HCT116 (cell line): ENCODE measurements at regions of chr3 and their contacts with region 1.

Region 1: GRCh38 chr3:67113802-67114407 is 115.8 kb downstream of the KBTBD8 start:
- DNase-seq: peak; percentile 62
- ATAC-seq: peak; percentile 93
- H3K4me3 ChIP-seq: no peak overlapping the region
- H3K27ac ChIP-seq: no peak overlapping the region
- H3K4me1 ChIP-seq: no peaks in the 10 kb centered on the region
- H3K27me3 ChIP-seq: no peaks in the 10 kb centered on the region
- CTCF ChIP-seq: peak; percentile 72 to 94 (median 89)
- POLR2A ChIP-seq: no peak
- RAD21 ChIP-seq: peak; percentile 72

Region 2: GRCh38 chr3:66394019-66394752 is 719.7 kb before region 1 on chr3:
- CTCF ChIA-PET with region 1: no interaction called
- POLR2A ChIA-PET with region 1: no interaction called
- RAD21 ChIA-PET with region 1: no interaction called
- intact Hi-C with region 1: no loop called
- DNase-seq: no peak
- ATAC-seq: no peak
- H3K4me3 ChIP-seq: no peak overlapping the region
- H3K27ac ChIP-seq: no peak overlapping the region
- H3K4me1 ChIP-seq: no peaks in the 10 kb centered on the region
- H3K27me3 ChIP-seq: no peaks in the 10 kb centered on the region
- CTCF ChIP-seq: no peak
- POLR2A ChIP-seq: no peak
- RAD21 ChIP-seq: no peak

Region 3: DNA sequence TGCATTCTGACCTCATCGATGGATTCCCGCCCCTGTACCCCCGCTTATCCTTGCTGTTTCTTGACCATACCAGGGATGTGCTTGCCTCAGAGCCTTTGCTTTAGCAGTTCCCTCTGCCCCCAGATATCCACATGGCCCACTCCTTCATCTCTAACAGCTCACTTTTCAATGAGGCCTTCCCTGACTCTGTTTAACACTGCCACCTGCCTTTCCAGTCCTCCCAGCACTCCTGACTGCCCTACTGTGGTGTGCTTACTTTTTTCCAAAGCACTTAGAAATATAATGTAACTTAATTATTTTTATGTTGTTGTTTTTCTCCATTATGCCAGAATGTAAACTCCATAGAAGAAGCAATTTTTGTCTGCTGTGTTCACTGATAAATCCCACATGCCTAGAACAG is 340.6 kb before region 1 on chr3:
- CTCF ChIA-PET with region 1: no interaction called
- POLR2A ChIA-PET with region 1: no interaction called
- RAD21 ChIA-PET with region 1: no interaction called
- intact Hi-C with region 1: no loop called
- DNase-seq: no peak
- ATAC-seq: no peak
- H3K4me3 ChIP-seq: no peak overlapping the region
- H3K27ac ChIP-seq: no peak overlapping the region
- H3K4me1 ChIP-seq: no peaks in the 10 kb centered on the region
- H3K27me3 ChIP-seq: peaks cover 26% of the 10 kb centered on the region
- CTCF ChIP-seq: no peak
- POLR2A ChIP-seq: no peak
- RAD21 ChIP-seq: no peak

Region 4: GRCh38 chr3:66948838-66949237 is 165.1 kb before region 1 on chr3:
- CTCF ChIA-PET with region 1: no interaction called
- POLR2A ChIA-PET with region 1: no interaction called
- RAD21 ChIA-PET with region 1: no interaction called
- intact Hi-C with region 1: no loop called
- DNase-seq: no peak
- ATAC-seq: no peak
- H3K4me3 ChIP-seq: no peak overlapping the region
- H3K27ac ChIP-seq: no peak overlapping the region
- H3K4me1 ChIP-seq: no peaks in the 10 kb centered on the region
- H3K27me3 ChIP-seq: peaks cover 78% of the 10 kb centered on the region
- CTCF ChIP-seq: no peak
- POLR2A ChIP-seq: no peak
- RAD21 ChIP-seq: no peak

Region 5: GRCh38 chr3:66971891-66972551 is 141.9 kb before region 1 on chr3:
- CTCF ChIA-PET with region 1: interaction called, 5 read pairs
- POLR2A ChIA-PET with region 1: no interaction called
- RAD21 ChIA-PET with region 1: no interaction called
- intact Hi-C with region 1: loop called (anchors 2 kb)
- DNase-seq: peak; percentile 51
- ATAC-seq: peak; percentile 98
- H3K4me3 ChIP-seq: peak overlapping the region; percentile 17 to 35; a peak in 3 of 4 replicates
- H3K27ac ChIP-seq: no peak overlapping the region
- H3K4me1 ChIP-seq: peaks cover 0 to 6% of the 10 kb centered on the region in 2 experiments; a peak in 1 of 4 replicates
- H3K27me3 ChIP-seq: peaks cover 30% of the 10 kb centered on the region
- CTCF ChIP-seq: peak; percentile 59 to 84 (median 83); a peak in 5 of 6 replicates
- POLR2A ChIP-seq: no peak
- RAD21 ChIP-seq: peak; percentile 71

Region 6: GRCh38 chr3:67468511-67468910 is 354.6 kb after region 1 on chr3:
- CTCF ChIA-PET with region 1: no interaction called
- POLR2A ChIA-PET with region 1: no interaction called
- RAD21 ChIA-PET with region 1: no interaction called
- intact Hi-C with region 1: no loop called
- DNase-seq: no peak
- ATAC-seq: no peak
- H3K4me3 ChIP-seq: no peak overlapping the region
- H3K27ac ChIP-seq: no peak overlapping the region
- H3K4me1 ChIP-seq: no peaks in the 10 kb centered on the region
- H3K27me3 ChIP-seq: no peaks in the 10 kb centered on the region
- CTCF ChIP-seq: no peak
- POLR2A ChIP-seq: no peak
- RAD21 ChIP-seq: no peak

Region 7: GRCh38 chr3:67790043-67790442 is 676.1 kb after region 1 on chr3:
- CTCF ChIA-PET with region 1: interaction called, 3 read pairs
- POLR2A ChIA-PET with region 1: no interaction called
- RAD21 ChIA-PET with region 1: interaction called in 1 of 2 experiments, 3 read pairs
- intact Hi-C with region 1: loop called (anchors 2 kb)
- DNase-seq: peak; percentile 23
- ATAC-seq: peak; percentile 94
- H3K4me3 ChIP-seq: no peak overlapping the region
- H3K27ac ChIP-seq: no peak overlapping the region
- H3K4me1 ChIP-seq: no peaks in the 10 kb centered on the region
- H3K27me3 ChIP-seq: no peaks in the 10 kb centered on the region
- CTCF ChIP-seq: peak; percentile 46 to 74 (median 69); a peak in 5 of 6 replicates
- POLR2A ChIP-seq: no peak
- RAD21 ChIP-seq: peak; percentile 65

Region 8: DNA sequence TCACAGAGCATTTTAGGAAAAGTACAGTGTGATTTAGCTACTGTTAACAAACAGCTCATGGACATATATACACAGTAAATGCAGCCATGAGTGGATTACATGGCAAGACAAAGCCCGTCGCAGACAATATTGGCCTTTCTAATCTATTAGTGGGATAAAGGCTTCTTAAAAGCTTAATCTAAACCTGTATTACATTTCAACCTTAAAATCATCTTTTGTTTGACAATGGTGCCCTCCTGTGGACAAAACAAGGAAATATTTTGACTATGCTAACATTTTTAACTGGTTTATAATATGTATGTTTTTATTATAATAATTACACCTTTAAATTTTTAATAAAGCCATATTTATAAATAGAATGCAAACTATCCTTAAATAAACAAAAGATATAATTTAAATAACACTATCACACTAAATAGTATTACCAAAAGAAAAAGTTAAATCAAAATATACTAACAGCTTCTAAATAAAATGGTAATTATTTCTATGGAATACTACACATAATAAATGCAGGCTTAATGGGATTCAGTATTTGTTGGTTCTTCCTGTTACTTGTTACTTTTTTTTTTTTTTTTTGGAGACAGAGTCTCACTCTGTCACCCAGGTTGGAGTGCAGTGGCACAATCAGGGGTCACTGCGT is 1779.8 kb after region 1 on chr3:
- CTCF ChIA-PET with region 1: interaction called, 13 read pairs
- POLR2A ChIA-PET with region 1: no interaction called
- RAD21 ChIA-PET with region 1: no interaction called
- intact Hi-C with region 1: loop called (anchors 5 kb)
- DNase-seq: no peak
- ATAC-seq: no peak
- H3K4me3 ChIP-seq: no peak overlapping the region
- H3K27ac ChIP-seq: no peak overlapping the region
- H3K4me1 ChIP-seq: no peaks in the 10 kb centered on the region
- H3K27me3 ChIP-seq: peaks cover 24% of the 10 kb centered on the region
- CTCF ChIP-seq: peak; percentile 8 to 45 (median 33); a peak in 4 of 6 replicates
- POLR2A ChIP-seq: no peak
- RAD21 ChIP-seq: peak; percentile 60